ENCODE measurements at regions of chr16 and their contacts with region 1.

Region 1: DNA sequence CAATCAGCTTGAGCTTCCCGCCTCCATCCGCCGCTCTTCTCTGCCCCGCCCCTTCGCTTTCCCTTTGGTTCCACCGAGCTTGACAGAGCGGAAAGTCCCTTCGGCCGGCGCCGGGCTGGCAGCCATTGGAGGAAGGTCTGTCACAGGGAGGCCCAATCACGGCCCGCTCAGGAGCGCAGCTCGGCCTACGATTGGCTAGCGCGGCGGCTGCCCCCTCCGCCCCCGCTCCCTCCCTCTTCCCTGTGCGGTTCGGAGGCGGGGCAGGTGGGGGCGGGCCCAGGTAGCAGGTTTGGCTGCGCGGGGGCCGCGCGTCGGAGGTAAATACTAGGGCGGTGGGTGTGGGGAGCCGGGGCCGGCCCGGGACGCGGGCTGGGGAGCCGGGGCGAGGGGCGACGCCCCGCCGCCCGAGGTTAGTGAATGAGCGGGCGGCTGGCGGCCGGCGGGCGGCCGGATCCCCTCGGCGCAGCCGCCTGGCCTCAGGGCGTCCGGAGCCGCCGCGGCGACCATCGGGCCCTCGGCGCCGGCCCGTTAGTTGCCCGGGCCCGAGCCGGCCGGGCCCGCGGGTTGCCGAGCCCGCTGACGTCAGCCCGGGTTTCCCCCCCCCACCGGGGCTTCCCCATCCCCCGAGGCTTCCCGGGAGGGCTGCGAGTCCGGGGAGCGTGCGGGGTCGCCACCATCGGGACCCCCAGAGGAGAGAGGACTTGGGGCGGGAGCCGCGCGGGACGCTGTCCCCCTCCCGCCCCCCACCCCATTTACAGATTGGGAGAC is at the start of gene CYLD:
- DNase-seq: peak; percentile 99
- ATAC-seq: peak; percentile 98
- H3K4me3 Mint-ChIP-seq: peak within 1 kb of the TSS; percentile 73
- H3K27ac Mint-ChIP-seq: peak within 1 kb of the TSS; percentile 87; the same call in 1 of the 2 replicates
- H3K4me1 Mint-ChIP-seq: peaks cover 34% of the 10 kb centered on the region
- H3K27me3 Mint-ChIP-seq: no peaks in the 10 kb centered on the region; the same call in none of the 2 replicates
- CTCF ChIP-seq: no peak
- total RNA-seq, gene CYLD: 9.4 to 10.8 TPM (median 9.6 TPM) in 3 replicates

Region 2: GRCh38 chr16:50692999-50693781 is 48.8 kb before region 1 on chr16 and contains the start of gene NOD2:
- CTCF ChIA-PET with region 1: no interaction called
- POLR2A ChIA-PET with region 1: no interaction called
- DNase-seq: peak; percentile 52
- ATAC-seq: peak; percentile 93
- H3K4me3 Mint-ChIP-seq: peak within 1 kb of the TSS; percentile 64
- H3K27ac Mint-ChIP-seq: no peak within 1 kb of the TSS
- H3K4me1 Mint-ChIP-seq: no peaks in the 10 kb centered on the region
- H3K27me3 Mint-ChIP-seq: peaks cover 30% of the 10 kb centered on the region
- CTCF ChIP-seq: no peak
- total RNA-seq, gene NOD2: 0.11 to 0.60 TPM (median 0.34 TPM) in 3 replicates

Region 3: GRCh38 chr16:50781043-50781442 is 39.1 kb after region 1 on chr16:
- CTCF ChIA-PET with region 1: interaction called, 10 read pairs
- POLR2A ChIA-PET with region 1: no interaction called
- DNase-seq: peak; percentile 31
- ATAC-seq: peak; percentile 98
- H3K4me3 Mint-ChIP-seq: no peak overlapping the region
- H3K27ac Mint-ChIP-seq: peak overlapping the region; percentile 83
- H3K4me1 Mint-ChIP-seq: peaks cover 2% of the 10 kb centered on the region
- H3K27me3 Mint-ChIP-seq: no peaks in the 10 kb centered on the region
- CTCF ChIP-seq: peak; percentile 29; the same call in 1 of the 2 replicates